Colonic mucosa (tissue), 4 donors: ENCODE measurements at regions of chr11 and their contacts with region 1.

Region 1: GRCh38 chr11:96694338-96694737 is 304.5 kb downstream of the JRKL start:
- DNase-seq: no peak
- H3K4me3 ChIP-seq: no peak overlapping the region
- H3K27ac ChIP-seq: no peak overlapping the region
- H3K4me1 ChIP-seq: no peaks in the 10 kb centered on the region
- H3K27me3 ChIP-seq: no peaks in the 10 kb centered on the region
- CTCF ChIP-seq: no peak

Region 2: DNA sequence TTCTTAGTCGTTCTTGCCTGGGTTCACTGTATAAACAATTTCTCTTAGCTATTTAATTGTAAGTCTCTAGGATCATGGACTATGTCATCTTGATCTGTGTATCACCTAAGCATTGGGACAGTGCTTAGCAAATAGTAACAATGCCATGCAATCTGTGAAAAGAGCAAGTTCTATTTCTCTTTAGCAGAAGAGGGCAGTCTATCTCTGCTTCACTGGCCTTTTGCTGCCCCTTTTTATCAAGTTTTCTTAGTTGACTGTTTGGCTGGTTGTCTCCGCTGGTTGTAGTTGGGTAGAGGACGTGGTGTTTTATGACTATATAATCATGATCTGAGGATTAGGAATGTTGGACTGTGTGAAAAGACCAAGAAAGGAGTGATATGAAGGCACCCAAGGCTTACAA is 10.5 kb after region 1 on chr11:
- intact Hi-C with region 1: loop called (anchors 2 kb)
- DNase-seq: no peak
- H3K4me3 ChIP-seq: no peak overlapping the region
- H3K27ac ChIP-seq: no peak overlapping the region
- H3K4me1 ChIP-seq: no peaks in the 10 kb centered on the region
- H3K27me3 ChIP-seq: no peaks in the 10 kb centered on the region
- CTCF ChIP-seq: no peak

Region 3: DNA sequence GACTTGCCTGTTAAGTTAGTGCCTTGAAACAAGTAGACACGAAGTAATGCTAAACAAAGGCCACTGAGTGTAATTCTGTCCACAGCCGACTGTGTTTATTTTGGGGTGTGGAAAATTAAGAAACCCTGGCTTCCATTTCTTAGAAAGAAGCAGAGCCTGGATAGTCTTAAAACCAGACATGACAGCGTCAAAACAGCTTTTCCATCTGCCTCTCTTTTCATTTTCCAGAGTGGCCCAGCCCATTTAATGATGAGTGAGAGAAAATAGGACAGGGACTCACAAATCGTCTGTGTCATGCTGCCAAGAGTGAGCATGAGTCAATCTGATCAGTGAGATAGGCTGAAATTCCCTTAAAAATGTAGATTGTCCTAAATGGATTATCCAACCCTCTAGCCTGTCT is 181.4 kb after region 1 on chr11:
- intact Hi-C with region 1: no loop called
- DNase-seq: no peak
- H3K4me3 ChIP-seq: no peak overlapping the region
- H3K27ac ChIP-seq: no peak overlapping the region
- H3K4me1 ChIP-seq: no peaks in the 10 kb centered on the region
- H3K27me3 ChIP-seq: no peaks in the 10 kb centered on the region
- CTCF ChIP-seq: no peak

Region 4: DNA sequence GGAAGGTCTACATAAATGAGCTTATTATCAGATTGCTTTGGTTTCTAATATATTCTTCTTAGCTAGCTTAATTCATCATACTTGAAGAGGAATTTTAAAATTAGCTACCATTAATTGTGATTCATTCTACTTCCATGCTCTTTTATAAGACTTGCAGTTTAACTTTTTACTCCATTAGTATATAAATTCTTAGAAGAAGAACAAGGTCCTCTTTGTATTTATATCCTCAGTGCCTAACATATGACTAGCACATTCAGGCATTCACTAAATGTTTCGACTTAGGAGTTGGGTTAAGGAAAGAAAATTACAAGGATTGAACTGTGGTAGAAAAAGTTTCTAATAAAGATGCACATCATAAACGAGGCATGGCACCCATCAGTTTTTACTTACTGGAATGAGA is 830.9 kb after region 1 on chr11:
- intact Hi-C with region 1: no loop called
- DNase-seq: no peak
- H3K4me3 ChIP-seq: no peak overlapping the region
- H3K27ac ChIP-seq: no peak overlapping the region
- H3K4me1 ChIP-seq: no peaks in the 10 kb centered on the region
- H3K27me3 ChIP-seq: no peaks in the 10 kb centered on the region
- CTCF ChIP-seq: no peak